Activated CD4-positive, alpha-beta memory T cell treated with anti-CD3 and anti-CD28 coated beads, Interleukin-2, amount 10 ng/mL, durations not matched to agents 7 days and 5 days (primary cell): ENCODE measurements at regions of chr5 and their contacts with region 1.

Region 1: GRCh38 chr5:115544436-115545350 is at the start of gene FEM1C:
- DNase-seq: peak; percentile 96
- H3K4me3 Mint-ChIP-seq: peak within 1 kb of the TSS; percentile 94
- H3K27ac Mint-ChIP-seq: peak within 1 kb of the TSS; percentile 99
- H3K4me1 Mint-ChIP-seq: peaks cover 47% of the 10 kb centered on the region
- H3K27me3 Mint-ChIP-seq: no peaks in the 10 kb centered on the region
- total RNA-seq, gene FEM1C: 16.8 to 17.0 TPM

Region 2: GRCh38 chr5:115262321-115263077 is 282.2 kb before region 1 on chr5 and contains the start of gene PGGT1B:
- CTCF ChIA-PET with region 1: no interaction called
- POLR2A ChIA-PET with region 1: interaction called, 15 read pairs
- DNase-seq: peak; percentile 78
- H3K4me3 Mint-ChIP-seq: peak within 1 kb of the TSS; percentile 98
- H3K27ac Mint-ChIP-seq: peak within 1 kb of the TSS; percentile 90
- H3K4me1 Mint-ChIP-seq: peaks cover 35% of the 10 kb centered on the region
- H3K27me3 Mint-ChIP-seq: no peaks in the 10 kb centered on the region
- total RNA-seq, gene PGGT1B: 43.4 to 43.6 TPM

Region 3: DNA sequence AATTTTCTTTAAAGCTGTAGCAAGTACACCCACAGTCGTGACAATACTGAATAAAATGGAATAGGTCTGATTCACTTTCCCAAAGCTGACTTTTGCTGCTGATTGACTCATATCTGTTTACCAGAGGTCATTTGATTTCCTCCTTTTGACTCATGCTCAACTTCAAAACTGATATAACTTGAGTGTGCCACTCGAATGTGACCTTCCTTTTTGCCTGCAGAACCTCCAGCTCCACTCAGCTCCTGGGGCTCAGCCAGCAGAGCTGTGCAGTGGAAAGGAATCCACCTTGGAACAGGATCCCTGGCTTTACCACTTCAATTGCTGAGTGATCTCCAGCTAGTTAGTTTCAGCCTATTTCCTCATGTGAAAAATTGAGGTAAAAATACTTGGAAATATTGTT is 84.2 kb before region 1 on chr5:
- CTCF ChIA-PET with region 1: interaction called, 3 read pairs
- POLR2A ChIA-PET with region 1: interaction called, 23 read pairs
- DNase-seq: no peak
- H3K4me3 Mint-ChIP-seq: no peak overlapping the region
- H3K27ac Mint-ChIP-seq: no peak overlapping the region
- H3K4me1 Mint-ChIP-seq: peaks cover 2% of the 10 kb centered on the region
- H3K27me3 Mint-ChIP-seq: peaks cover 32% of the 10 kb centered on the region

Region 4: GRCh38 chr5:115601701-115602590 is 57.3 kb after region 1 on chr5 and contains the start of gene TICAM2:
- CTCF ChIA-PET with region 1: no interaction called
- POLR2A ChIA-PET with region 1: interaction called, 13 read pairs
- DNase-seq: peak; percentile 62
- H3K4me3 Mint-ChIP-seq: peak within 1 kb of the TSS; percentile 67
- H3K27ac Mint-ChIP-seq: peak within 1 kb of the TSS; percentile 11
- H3K4me1 Mint-ChIP-seq: peaks cover 26% of the 10 kb centered on the region
- H3K27me3 Mint-ChIP-seq: no peaks in the 10 kb centered on the region
- total RNA-seq, gene TICAM2: 1.8 to 2.5 TPM

Region 5: DNA sequence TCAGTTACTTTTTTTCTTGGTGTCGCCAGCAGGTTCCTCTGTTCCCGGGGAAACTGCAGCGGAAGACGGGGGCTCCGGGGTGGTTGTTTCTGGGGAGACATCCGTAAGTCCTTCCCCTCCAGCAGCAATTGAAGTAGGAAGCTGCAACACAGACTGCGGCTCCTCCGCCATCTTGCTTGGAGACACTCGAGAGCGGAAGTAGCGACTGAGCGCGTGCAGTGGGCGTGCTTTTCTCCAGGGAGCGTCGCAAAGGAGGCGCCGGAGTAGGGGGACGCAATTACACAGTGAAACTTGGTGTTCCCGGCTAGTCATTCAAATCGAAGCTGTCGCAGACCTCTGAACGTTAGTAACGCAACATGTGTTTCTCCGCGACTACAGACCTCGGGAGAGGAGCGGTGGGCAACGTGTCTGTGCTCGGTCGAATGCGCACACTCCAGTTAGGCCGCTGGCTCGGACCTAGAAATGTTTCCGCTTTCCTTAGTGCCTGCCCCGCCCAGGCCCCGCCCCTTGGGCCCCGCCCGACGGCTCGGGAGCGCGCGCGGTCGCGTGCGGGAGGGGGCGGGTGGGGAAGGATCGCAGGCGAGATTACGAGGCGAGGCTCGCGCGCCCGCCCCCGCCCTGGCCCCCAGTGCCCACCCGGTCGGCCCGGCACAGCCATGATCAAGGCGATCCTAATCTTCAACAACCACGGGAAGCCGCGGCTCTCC is 296.8 kb after region 1 on chr5 and contains the starts of genes AP3S1 and ATG12:
- CTCF ChIA-PET with region 1: no interaction called
- POLR2A ChIA-PET with region 1: interaction called, 20 read pairs
- DNase-seq: peak; percentile 91
- H3K4me3 Mint-ChIP-seq: peak within 1 kb of the TSS; percentile 88
- H3K27ac Mint-ChIP-seq: peak within 1 kb of the TSS; percentile 93
- H3K4me1 Mint-ChIP-seq: peaks cover 54% of the 10 kb centered on the region
- H3K27me3 Mint-ChIP-seq: no peaks in the 10 kb centered on the region
- total RNA-seq, gene AP3S1: 73.5 to 87.0 TPM
- total RNA-seq, gene ATG12: 45.5 to 49.0 TPM